A549 (cell line): ENCODE measurements at regions of chr2 and their contacts with region 1.

Region 1: DNA sequence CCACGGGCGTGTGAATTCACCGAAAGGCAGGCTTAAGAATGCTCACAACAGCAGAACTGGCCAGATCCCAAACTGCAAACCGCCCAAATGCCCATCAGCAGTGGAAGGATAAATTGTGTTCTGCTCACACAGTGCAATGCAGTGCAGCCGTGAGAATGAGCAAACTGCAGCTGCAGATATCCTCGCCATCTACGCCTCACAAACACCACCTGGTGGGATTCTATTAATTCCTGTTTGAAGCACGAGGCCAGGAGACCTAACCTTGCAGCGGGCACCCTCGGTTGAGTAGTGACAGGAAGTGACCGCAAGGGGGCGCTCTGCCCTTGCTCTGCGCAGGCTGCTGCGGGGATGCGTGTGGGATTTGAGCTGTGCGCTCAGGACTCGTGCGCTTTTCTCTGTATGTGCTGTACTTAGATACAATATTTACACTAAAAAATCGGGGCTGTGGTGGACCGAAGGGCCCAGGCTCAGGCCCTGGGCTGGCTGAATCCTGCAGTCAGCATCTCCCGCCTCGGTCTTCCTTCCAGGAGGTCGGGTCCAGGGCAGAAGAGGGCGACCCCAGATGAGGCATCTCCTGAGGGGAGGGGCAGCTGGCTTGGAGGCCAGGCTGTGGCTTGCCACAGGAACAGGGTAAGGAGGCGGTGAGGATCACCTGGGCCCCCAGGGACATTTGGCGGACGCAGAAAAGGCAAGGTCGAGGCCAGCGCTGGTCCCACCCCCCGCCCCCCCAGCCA is 19.8 kb upstream of the PDIA6 start:
- DNase-seq: peak; percentile 87 to 88
- ATAC-seq: peak; percentile 72 to 91
- H3K4me3 ChIP-seq: no peak overlapping the region
- H3K27ac ChIP-seq: peak overlapping the region in 1 of 2 experiments; percentile 43; a peak in 1 of 6 replicates
- H3K4me1 ChIP-seq: no peaks in the 10 kb centered on the region
- CTCF ChIP-seq: peak; percentile 99
- EP300 ChIP-seq: no peak
- POLR2A ChIP-seq: no peak
- RAD21 ChIP-seq: peak; percentile 99 to 100

Region 2: GRCh38 chr2:10647886-10648605 is 184.3 kb before region 1 on chr2:
- CTCF ChIA-PET with region 1: no interaction called
- POLR2A ChIA-PET with region 1: no interaction called
- DNase-seq: no peak
- ATAC-seq: peak in 1 of 2 experiments; percentile 30; a peak in 2 of 6 replicates
- H3K4me3 ChIP-seq: no peak overlapping the region
- H3K27ac ChIP-seq: no peak overlapping the region
- H3K4me1 ChIP-seq: no peaks in the 10 kb centered on the region
- CTCF ChIP-seq: no peak
- EP300 ChIP-seq: no peak
- POLR2A ChIP-seq: no peak
- RAD21 ChIP-seq: no peak

Region 3: DNA sequence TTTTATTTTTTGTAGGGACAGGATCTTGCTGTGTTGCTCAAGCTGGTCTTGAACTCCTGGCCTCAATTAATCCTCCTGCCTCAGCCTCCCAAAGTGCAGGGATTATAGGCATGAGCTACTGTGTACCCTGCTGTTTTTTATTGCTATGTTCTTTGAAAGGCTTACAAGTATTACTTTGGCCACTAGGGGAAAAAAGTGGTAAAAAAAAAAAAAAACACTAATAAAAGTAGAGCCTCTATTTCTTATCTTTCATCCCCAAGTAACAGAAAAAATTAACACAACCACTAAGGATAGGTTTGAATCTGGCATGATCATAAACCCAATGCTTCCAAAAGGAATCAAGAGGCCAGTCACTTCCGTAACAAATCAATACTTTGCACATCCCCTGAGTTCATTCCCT is 154.1 kb before region 1 on chr2:
- CTCF ChIA-PET with region 1: no interaction called
- POLR2A ChIA-PET with region 1: no interaction called
- DNase-seq: peak in 1 of 2 experiments; percentile 52
- ATAC-seq: peak; percentile 47 to 79; a peak in 3 of 6 replicates
- H3K4me3 ChIP-seq: no peak overlapping the region
- H3K27ac ChIP-seq: no peak overlapping the region
- H3K4me1 ChIP-seq: peaks cover 4% of the 10 kb centered on the region; the same call in 1 of the 3 replicates
- CTCF ChIP-seq: peak; percentile 23
- EP300 ChIP-seq: no peak
- POLR2A ChIP-seq: no peak
- RAD21 ChIP-seq: no peak

Region 4: GRCh38 chr2:10812362-10813162 is 19.8 kb before region 1 on chr2 and contains the start of gene PDIA6:
- CTCF ChIA-PET with region 1: interaction called, 55 read pairs
- POLR2A ChIA-PET with region 1: interaction called, 3 read pairs
- DNase-seq: peak; percentile 97
- ATAC-seq: peak; percentile 94 to 98
- H3K4me3 ChIP-seq: peak within 1 kb of the TSS; percentile 85
- H3K27ac ChIP-seq: peak within 1 kb of the TSS; percentile 90 to 93
- H3K4me1 ChIP-seq: peaks cover 18% of the 10 kb centered on the region
- CTCF ChIP-seq: no peak
- EP300 ChIP-seq: no peak
- POLR2A ChIP-seq: peak; percentile 76
- RAD21 ChIP-seq: no peak
- polyA plus RNA-seq, gene PDIA6: 292 and 442 TPM in 2 replicates

Region 5: DNA sequence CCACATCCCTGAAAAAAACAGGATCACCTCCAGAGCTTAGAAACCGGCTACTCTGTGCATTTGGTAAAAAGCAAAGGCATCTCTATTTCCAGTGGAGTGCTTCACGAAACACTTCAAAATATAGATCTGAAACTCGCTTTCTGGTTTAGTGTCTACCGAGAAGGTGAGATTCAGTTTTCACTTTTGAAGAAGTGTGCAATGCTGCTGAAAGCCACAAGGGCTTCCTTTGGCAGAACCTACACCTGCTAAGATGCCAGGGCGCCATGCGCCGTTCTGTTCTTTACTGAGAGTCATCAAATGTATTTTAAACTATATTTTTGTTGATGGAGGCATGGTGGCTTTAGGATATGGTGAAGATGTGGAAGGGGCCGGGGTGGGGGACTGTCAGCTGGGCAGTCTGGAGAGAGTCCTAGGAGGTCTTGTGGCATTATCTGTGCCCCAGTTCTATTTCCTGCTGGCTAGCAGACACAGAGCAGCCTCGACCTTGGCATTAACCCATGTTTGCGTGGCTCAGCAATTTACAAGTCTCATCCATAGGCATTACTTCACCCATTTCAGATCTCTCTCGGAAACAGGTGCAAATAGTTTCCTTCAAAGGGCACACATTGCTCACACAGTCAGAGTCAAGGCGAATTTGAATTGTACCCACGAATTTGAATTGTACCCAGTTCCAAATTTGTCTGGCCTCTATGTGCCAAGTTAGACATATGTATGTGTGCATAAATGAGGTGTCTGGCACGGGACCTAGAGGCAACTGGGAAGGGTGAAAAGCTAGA is 32.7 kb after region 1 on chr2:
- CTCF ChIA-PET with region 1: interaction called, 14 read pairs
- POLR2A ChIA-PET with region 1: no interaction called
- DNase-seq: no peak
- ATAC-seq: peak; percentile 36 to 69; a peak in 3 of 6 replicates
- H3K4me3 ChIP-seq: no peak overlapping the region
- H3K27ac ChIP-seq: no peak overlapping the region
- H3K4me1 ChIP-seq: no peaks in the 10 kb centered on the region; the same call in 2 of the 3 replicates
- CTCF ChIP-seq: no peak
- EP300 ChIP-seq: no peak
- POLR2A ChIP-seq: no peak
- RAD21 ChIP-seq: no peak

Region 6: DNA sequence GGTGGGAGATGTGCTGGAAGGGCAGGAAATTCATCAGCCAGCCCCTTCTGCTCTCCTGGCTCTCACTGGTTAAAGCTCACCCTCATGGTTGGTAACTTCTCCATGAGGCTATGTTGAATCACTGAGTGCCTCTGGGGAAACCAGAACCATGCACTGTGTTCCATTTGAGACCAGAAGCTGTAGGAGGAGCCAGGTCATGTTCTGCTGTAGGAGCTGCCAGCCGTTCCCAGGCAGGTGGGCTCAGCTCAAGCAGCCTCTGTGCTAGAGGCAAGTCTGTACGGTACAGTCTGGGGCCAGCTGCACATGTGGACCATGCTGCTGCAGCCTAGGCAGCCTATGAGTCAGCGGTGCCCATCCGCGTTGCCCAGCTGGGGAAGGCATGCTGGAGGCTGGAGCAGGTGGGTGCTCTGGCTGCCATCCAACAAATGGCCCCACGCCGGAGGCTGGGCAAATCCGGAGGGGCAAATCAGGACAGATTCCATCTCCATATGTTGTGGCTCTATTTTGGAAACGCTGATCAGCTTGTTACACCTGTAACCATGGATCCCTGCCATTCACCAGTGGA is 57.4 kb after region 1 on chr2:
- CTCF ChIA-PET with region 1: interaction called, 18 read pairs
- POLR2A ChIA-PET with region 1: no interaction called
- DNase-seq: no peak
- ATAC-seq: peak; percentile 14 to 38; a peak in 2 of 6 replicates
- H3K4me3 ChIP-seq: no peak overlapping the region
- H3K27ac ChIP-seq: no peak overlapping the region
- H3K4me1 ChIP-seq: peaks cover 4% of the 10 kb centered on the region
- CTCF ChIP-seq: no peak
- EP300 ChIP-seq: no peak
- POLR2A ChIP-seq: no peak
- RAD21 ChIP-seq: no peak

Region 7: GRCh38 chr2:10911261-10912075 is 79.1 kb after region 1 on chr2 and contains the start of gene KCNF1:
- CTCF ChIA-PET with region 1: interaction called, 74 read pairs
- POLR2A ChIA-PET with region 1: no interaction called
- DNase-seq: peak; percentile 79 to 83
- ATAC-seq: peak; percentile 75 to 82
- H3K4me3 ChIP-seq: peak within 1 kb of the TSS; percentile 57
- H3K27ac ChIP-seq: peak within 1 kb of the TSS; percentile 79 to 93
- H3K4me1 ChIP-seq: peaks cover 13% of the 10 kb centered on the region
- CTCF ChIP-seq: peak; percentile 52
- EP300 ChIP-seq: no peak
- POLR2A ChIP-seq: peak; percentile 38
- RAD21 ChIP-seq: peak; percentile 54 to 74
- polyA plus RNA-seq, gene KCNF1: 4.4 and 5.6 TPM in 2 replicates

Region 8: DNA sequence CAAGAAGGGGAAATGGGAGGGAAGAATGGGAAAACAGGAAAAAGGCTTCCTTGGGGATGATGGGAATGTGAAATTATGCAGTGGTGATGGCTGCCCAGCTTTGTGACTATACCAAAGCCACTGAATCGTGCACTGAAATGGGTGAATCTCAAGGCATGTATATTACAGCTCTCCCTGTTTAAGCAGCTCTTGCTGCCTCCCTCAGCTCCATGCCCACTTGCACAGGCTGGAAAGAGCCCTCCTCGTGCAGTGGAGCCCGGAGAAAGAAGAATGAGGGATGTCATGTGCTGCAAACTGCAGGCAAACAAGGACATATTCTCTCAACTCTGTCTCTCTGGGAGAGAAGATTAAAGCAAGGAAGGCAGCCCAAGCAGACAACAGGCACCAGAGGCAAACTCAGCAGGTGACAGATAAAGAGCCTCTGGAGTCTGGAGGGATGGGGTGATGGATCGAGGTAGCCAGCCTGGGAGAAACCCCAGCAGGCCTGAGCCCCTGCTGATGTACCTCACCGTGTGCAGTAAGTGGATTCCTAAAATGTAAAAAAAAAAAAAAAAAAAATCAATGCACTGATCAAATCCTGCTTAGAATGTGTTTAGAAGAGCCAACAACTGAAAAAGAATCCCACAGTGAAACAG is 260.4 kb after region 1 on chr2:
- CTCF ChIA-PET with region 1: interaction called, 15 read pairs
- POLR2A ChIA-PET with region 1: no interaction called
- DNase-seq: no peak
- ATAC-seq: peak in 1 of 2 experiments; percentile 39; a peak in 3 of 6 replicates
- H3K4me3 ChIP-seq: no peak overlapping the region
- H3K27ac ChIP-seq: no peak overlapping the region
- H3K4me1 ChIP-seq: peaks cover 11% of the 10 kb centered on the region; the same call in 2 of the 3 replicates
- CTCF ChIP-seq: no peak
- EP300 ChIP-seq: no peak
- POLR2A ChIP-seq: no peak
- RAD21 ChIP-seq: no peak

Region 9: GRCh38 chr2:11124503-11125068 is 292.2 kb after region 1 on chr2:
- CTCF ChIA-PET with region 1: interaction called, 1,025 read pairs
- POLR2A ChIA-PET with region 1: interaction called, 3 read pairs
- DNase-seq: peak; percentile 77 to 85
- ATAC-seq: peak; percentile 83 to 93
- H3K4me3 ChIP-seq: no peak overlapping the region
- H3K27ac ChIP-seq: no peak overlapping the region; a peak in 1 of 6 replicates
- H3K4me1 ChIP-seq: 0 out of 3 replicates have a peak, but pooled peaks cover 2% of the 10 kb centered on the region
- CTCF ChIP-seq: peak; percentile 96
- EP300 ChIP-seq: no peak
- POLR2A ChIP-seq: no peak
- RAD21 ChIP-seq: peak; percentile 99